Activated CD4-positive, alpha-beta memory T cell treated with anti-CD3 and anti-CD28 coated beads for 36 hours (primary cell): ENCODE measurements at regions of chr3 and their contacts with region 1.

Region 1: GRCh38 chr3:113626503-113627371 is 69.7 kb downstream of the USF3 start:
- DNase-seq: no peak
- H3K4me3 Mint-ChIP-seq: no peak overlapping the region
- H3K27ac Mint-ChIP-seq: no peak overlapping the region
- H3K4me1 Mint-ChIP-seq: no peaks in the 10 kb centered on the region
- H3K27me3 Mint-ChIP-seq: no peaks in the 10 kb centered on the region

Region 2: GRCh38 chr3:113606539-113607218 is 20.1 kb before region 1 on chr3:
- CTCF ChIA-PET with region 1: no interaction called
- POLR2A ChIA-PET with region 1: no interaction called
- intact Hi-C with region 1: loop called (anchors 2 kb)
- DNase-seq: peak; percentile 67
- H3K4me3 Mint-ChIP-seq: no peak overlapping the region
- H3K27ac Mint-ChIP-seq: no peak overlapping the region
- H3K4me1 Mint-ChIP-seq: peaks cover 18% of the 10 kb centered on the region
- H3K27me3 Mint-ChIP-seq: no peaks in the 10 kb centered on the region

Region 3: DNA sequence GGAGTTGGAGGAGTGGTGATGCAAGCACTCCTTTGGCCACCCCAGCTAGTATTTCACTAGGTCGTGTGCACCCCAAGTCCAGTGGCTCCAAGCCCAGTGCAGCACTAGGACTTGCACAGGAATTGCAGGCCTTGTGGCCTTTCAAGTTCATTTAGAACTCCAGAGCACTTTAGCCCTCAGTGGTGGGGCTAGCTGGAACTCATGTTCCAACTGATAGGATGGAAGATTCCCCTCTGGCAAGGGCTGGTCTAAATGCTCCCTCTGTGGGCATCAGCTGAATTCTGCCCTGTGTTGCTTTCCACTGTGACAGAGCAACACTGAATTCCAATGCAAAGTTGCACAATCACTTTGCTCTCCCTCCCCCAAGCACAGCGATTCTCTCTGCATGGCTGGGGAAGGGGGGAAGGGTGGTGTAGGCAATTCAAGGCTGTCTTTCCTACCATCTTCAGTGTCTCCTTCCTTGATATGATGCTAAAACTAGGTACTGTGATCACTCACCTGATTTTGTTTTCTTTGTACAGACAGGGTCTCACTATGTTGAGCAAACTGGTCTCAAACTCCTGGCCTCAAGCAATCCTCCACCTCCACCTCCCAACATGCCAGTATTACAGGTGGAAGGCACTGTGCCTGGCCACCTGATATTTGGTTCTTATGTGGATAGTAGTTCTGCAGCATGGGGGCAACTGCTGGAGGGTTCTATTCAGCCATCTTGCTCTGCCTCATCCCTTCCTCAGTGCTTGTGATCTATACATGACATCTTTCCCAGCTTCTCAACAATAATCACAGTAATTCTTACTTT is 59.4 kb after region 1 on chr3:
- CTCF ChIA-PET with region 1: no interaction called
- POLR2A ChIA-PET with region 1: no interaction called
- intact Hi-C with region 1: no loop called
- DNase-seq: no peak
- H3K4me3 Mint-ChIP-seq: no peak overlapping the region
- H3K27ac Mint-ChIP-seq: no peak overlapping the region
- H3K4me1 Mint-ChIP-seq: no peaks in the 10 kb centered on the region
- H3K27me3 Mint-ChIP-seq: no peaks in the 10 kb centered on the region